GM10248 (cell line): ENCODE measurements at regions of chr16 and their contacts with region 1.

Region 1: DNA sequence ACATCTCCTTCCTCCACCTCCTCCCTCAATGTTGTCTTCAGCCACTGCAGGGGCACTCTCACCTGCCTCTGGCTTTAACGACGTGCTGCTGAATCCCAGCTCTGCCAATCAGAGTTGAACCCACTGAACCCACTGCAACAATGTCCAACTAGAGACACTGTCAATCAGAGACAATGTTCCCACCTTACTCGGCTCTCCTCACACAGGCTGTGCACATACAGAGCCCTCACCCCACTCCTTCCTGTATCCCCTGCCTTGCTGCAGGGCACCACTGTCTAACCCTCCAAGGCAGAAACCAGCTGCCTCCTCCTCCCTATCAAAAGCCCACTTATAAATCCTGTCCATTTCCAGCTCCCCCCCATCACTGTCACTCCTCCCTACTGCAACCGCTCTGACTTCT is 58.7 kb downstream of the ANKRD11 start:
- DNase-seq: no peak
- CTCF ChIP-seq: no peak

Region 2: GRCh38 chr16:89338863-89339262 is 92.8 kb before region 1 on chr16:
- CTCF ChIA-PET with region 1: interaction called, 3 read pairs
- POLR2A ChIA-PET with region 1: interaction called, 13 read pairs
- DNase-seq: no peak
- CTCF ChIP-seq: no peak

Region 3: GRCh38 chr16:89401641-89402445 is 29.8 kb before region 1 on chr16:
- CTCF ChIA-PET with region 1: no interaction called
- POLR2A ChIA-PET with region 1: no interaction called
- DNase-seq: no peak
- CTCF ChIP-seq: no peak

Region 4: DNA sequence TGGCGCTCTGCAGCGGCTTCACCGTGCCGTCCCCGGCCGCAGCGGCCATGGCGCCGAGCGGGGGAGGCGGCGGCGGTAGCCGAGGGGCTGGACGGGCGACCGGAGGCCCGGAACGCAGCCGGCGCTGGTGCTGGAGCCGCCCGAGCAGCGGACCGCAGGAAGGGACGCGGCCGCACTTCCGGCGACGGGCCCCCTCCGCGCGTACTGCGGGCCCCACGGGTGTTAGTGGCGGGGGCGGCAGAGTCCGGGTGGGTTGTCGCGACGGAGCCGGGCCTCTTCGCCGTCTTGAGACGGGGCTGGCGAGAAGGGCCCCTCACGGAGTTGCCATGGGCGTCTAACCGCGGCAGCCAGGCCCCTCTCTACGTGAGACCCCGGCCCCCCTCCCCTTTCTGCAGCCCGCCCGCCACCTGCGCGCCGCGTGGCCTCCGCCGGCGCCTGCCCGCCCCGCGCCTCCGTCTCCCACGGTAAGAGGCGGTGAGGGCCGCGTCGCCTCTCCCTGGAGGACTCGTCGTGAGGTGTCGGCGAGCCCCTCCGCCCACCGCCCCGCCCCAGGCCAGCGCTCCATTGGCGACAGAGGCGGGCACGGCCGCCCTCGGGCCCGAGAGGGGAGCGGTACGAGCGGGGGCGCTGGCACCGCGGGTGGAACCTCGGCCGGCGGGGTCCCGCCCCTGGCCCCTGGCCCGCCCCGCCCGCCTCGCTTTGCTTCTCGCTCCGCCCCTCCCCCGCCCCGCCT is 289.3 kb after region 1 on chr16 and contains the starts of genes VPS9D1 and ZNF276:
- CTCF ChIA-PET with region 1: no interaction called
- POLR2A ChIA-PET with region 1: no interaction called
- DNase-seq: peak; percentile 83
- CTCF ChIP-seq: no peak